Gastrocnemius medialis (tissue), 4 donors: ENCODE measurements at regions of chr9 and their contacts with region 1.

Region 1: GRCh38 chr9:112097712-112098688 is 77.1 kb downstream of the SUSD1 start:
- DNase-seq: peak in 1 of 2 donors; percentile 11
- ATAC-seq: peak in 1 of 2 donors; percentile 64
- H3K4me3 ChIP-seq: no peak overlapping the region
- H3K27ac ChIP-seq: no peak overlapping the region
- H3K4me1 ChIP-seq: peaks cover 0 to 5% of the 10 kb centered on the region in 2 donors
- H3K27me3 ChIP-seq: no peaks in the 10 kb centered on the region
- CTCF ChIP-seq: peak; percentile 57 to 81 (median 70)
- POLR2A ChIP-seq: no peak

Region 2: GRCh38 chr9:111839388-111839787 is 258.6 kb before region 1 on chr9:
- in situ Hi-C with region 1: loop called in 1 of 4 experiments (anchors 25 kb)
- intact Hi-C with region 1: no loop called
- DNase-seq: peak in 1 of 2 donors; percentile 14
- ATAC-seq: no peak
- H3K4me3 ChIP-seq: no peak overlapping the region
- H3K27ac ChIP-seq: no peak overlapping the region
- H3K4me1 ChIP-seq: no peaks in the 10 kb centered on the region
- H3K27me3 ChIP-seq: no peaks in the 10 kb centered on the region
- CTCF ChIP-seq: no peak
- POLR2A ChIP-seq: no peak

Region 3: GRCh38 chr9:112174218-112174964 is 76.4 kb after region 1 on chr9:
- in situ Hi-C with region 1: no loop called
- intact Hi-C with region 1: no loop called
- DNase-seq: peak; percentile 5 to 25
- ATAC-seq: peak in 1 of 2 donors; percentile 44
- H3K4me3 ChIP-seq: peak overlapping the region; percentile 31 to 63 (median 56)
- H3K27ac ChIP-seq: no peak overlapping the region
- H3K4me1 ChIP-seq: peaks cover 0 to 5% of the 10 kb centered on the region in 2 donors
- H3K27me3 ChIP-seq: peaks cover 0 to 10% (median 5%) of the 10 kb centered on the region in 3 donors
- CTCF ChIP-seq: no peak
- POLR2A ChIP-seq: no peak

Region 4: DNA sequence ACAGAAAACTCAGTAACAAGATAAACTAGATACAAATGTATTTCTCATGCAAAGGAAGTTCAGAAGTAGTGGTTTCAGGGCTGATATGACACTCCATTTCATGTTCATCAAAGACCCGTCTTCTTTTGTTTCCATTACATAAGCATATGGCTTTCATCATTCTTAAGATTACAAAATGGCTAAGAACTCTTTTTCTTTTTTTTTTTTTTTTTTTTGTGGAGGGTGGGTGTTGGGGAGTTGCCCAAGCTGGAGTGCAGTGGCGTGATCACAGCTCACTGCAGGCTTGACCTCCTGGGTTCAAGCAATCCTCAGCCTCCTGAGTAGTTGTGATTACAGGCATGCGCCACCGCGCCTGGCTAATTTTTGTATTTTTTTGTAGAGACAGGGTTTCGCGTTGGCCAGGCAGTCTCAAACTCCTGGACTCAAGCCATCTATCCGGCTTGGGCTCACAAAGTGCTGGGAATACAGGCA is 257.5 kb after region 1 on chr9:
- in situ Hi-C with region 1: loop called (anchors 5 to 10 kb)
- intact Hi-C with region 1: loop called (anchors 2 kb)
- DNase-seq: no peak
- ATAC-seq: no peak
- H3K4me3 ChIP-seq: no peak overlapping the region
- H3K27ac ChIP-seq: no peak overlapping the region
- H3K4me1 ChIP-seq: no peaks in the 10 kb centered on the region
- H3K27me3 ChIP-seq: no peaks in the 10 kb centered on the region
- CTCF ChIP-seq: no peak
- POLR2A ChIP-seq: no peak

Region 5: GRCh38 chr9:112705768-112706427 is 607.9 kb after region 1 on chr9:
- in situ Hi-C with region 1: no loop called
- intact Hi-C with region 1: loop called (anchors 10 kb)
- DNase-seq: no peak
- ATAC-seq: no peak
- H3K4me3 ChIP-seq: no peak overlapping the region
- H3K27ac ChIP-seq: no peak overlapping the region
- H3K4me1 ChIP-seq: no peaks in the 10 kb centered on the region
- H3K27me3 ChIP-seq: no peaks in the 10 kb centered on the region
- CTCF ChIP-seq: no peak
- POLR2A ChIP-seq: no peak